ENCODE measurements at regions of chrX and their contacts with region 1.

Region 1: GRCh38 chrX:147848016-147848415 is 63.7 kb upstream of the FMR1 start:
- DNase-seq: no peak
- H3K4me3 ChIP-seq: no peak overlapping the region
- H3K4me3 Mint-ChIP-seq: no peak overlapping the region
- H3K27ac Mint-ChIP-seq: no peak overlapping the region
- H3K4me1 ChIP-seq: no peaks in the 10 kb centered on the region
- H3K4me1 Mint-ChIP-seq: no peaks in the 10 kb centered on the region
- H3K27me3 ChIP-seq: no peaks in the 10 kb centered on the region
- H3K27me3 Mint-ChIP-seq: no peaks in the 10 kb centered on the region
- CTCF ChIP-seq: no peak

Region 2: DNA sequence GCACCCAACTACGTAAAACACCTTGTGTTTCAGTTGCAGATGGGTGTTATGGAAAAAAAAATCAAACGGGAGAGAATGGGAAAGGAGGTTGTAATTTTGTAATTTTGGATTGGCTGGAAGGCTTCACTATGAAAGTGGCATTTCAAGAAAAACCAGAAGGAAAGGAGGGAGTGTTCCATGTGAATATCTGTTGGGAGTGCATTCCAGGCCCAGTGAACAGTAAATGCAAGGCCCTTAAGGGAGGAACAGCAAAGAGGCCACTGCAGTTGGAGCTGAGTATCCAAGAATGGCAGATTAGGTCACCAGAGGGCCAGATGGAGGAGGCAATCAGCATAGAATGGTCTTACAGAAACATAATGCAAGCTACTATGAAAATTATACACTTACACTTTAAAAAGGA is 132.1 kb before region 1 on chrX:
- CTCF ChIA-PET with region 1: no interaction called
- POLR2A ChIA-PET with region 1: no interaction called
- intact Hi-C with region 1: no loop called
- DNase-seq: no peak
- H3K4me3 ChIP-seq: no peak overlapping the region
- H3K4me3 Mint-ChIP-seq: no peak overlapping the region
- H3K27ac Mint-ChIP-seq: no peak overlapping the region
- H3K4me1 ChIP-seq: no peaks in the 10 kb centered on the region
- H3K4me1 Mint-ChIP-seq: no peaks in the 10 kb centered on the region
- H3K27me3 ChIP-seq: no peaks in the 10 kb centered on the region
- H3K27me3 Mint-ChIP-seq: no peaks in the 10 kb centered on the region
- CTCF ChIP-seq: no peak

Region 3: GRCh38 chrX:147803948-147804347 is 44.1 kb before region 1 on chrX:
- CTCF ChIA-PET with region 1: no interaction called
- POLR2A ChIA-PET with region 1: no interaction called
- intact Hi-C with region 1: no loop called
- DNase-seq: peak in 1 of 2 experiments; percentile 2
- H3K4me3 ChIP-seq: no peak overlapping the region
- H3K4me3 Mint-ChIP-seq: no peak overlapping the region
- H3K27ac Mint-ChIP-seq: no peak overlapping the region
- H3K4me1 ChIP-seq: no peaks in the 10 kb centered on the region
- H3K4me1 Mint-ChIP-seq: no peaks in the 10 kb centered on the region
- H3K27me3 ChIP-seq: no peaks in the 10 kb centered on the region
- H3K27me3 Mint-ChIP-seq: peaks cover 3% of the 10 kb centered on the region
- CTCF ChIP-seq: peak in 1 of 2 experiments; percentile 27

Region 4: GRCh38 chrX:147911192-147912022 is 63.4 kb after region 1 on chrX and contains the start of gene FMR1:
- CTCF ChIA-PET with region 1: no interaction called
- POLR2A ChIA-PET with region 1: no interaction called
- intact Hi-C with region 1: loop called (anchors 5 kb)
- DNase-seq: peak; percentile 92
- H3K4me3 ChIP-seq: peak within 1 kb of the TSS; percentile 79
- H3K4me3 Mint-ChIP-seq: peak within 1 kb of the TSS; percentile 96
- H3K27ac Mint-ChIP-seq: peak within 1 kb of the TSS; percentile 97
- H3K4me1 ChIP-seq: peaks cover 7% of the 10 kb centered on the region
- H3K4me1 Mint-ChIP-seq: peaks cover 11% of the 10 kb centered on the region
- H3K27me3 ChIP-seq: no peaks in the 10 kb centered on the region
- H3K27me3 Mint-ChIP-seq: no peaks in the 10 kb centered on the region
- CTCF ChIP-seq: no peak
- total RNA-seq, gene FMR1: 53.8 and 56.8 TPM in 2 replicates

Region 5: GRCh38 chrX:147935156-147935758 is 87.2 kb after region 1 on chrX:
- CTCF ChIA-PET with region 1: no interaction called
- POLR2A ChIA-PET with region 1: no interaction called
- intact Hi-C with region 1: no loop called
- DNase-seq: no peak
- H3K4me3 ChIP-seq: no peak overlapping the region
- H3K4me3 Mint-ChIP-seq: no peak overlapping the region
- H3K27ac Mint-ChIP-seq: no peak overlapping the region
- H3K4me1 ChIP-seq: no peaks in the 10 kb centered on the region
- H3K4me1 Mint-ChIP-seq: no peaks in the 10 kb centered on the region
- H3K27me3 ChIP-seq: no peaks in the 10 kb centered on the region
- H3K27me3 Mint-ChIP-seq: no peaks in the 10 kb centered on the region
- CTCF ChIP-seq: no peak

Measured in Caco-2 (cell line).